CD8-positive, alpha-beta T cell (primary cell): ENCODE measurements at regions of chr2 and their contacts with region 1.

Region 1: GRCh38 chr2:3267869-3268704 is 109.5 kb downstream of the EIPR1 start:
- DNase-seq: no peak
- ATAC-seq: no peak
- H3K4me3 ChIP-seq: no peak overlapping the region
- H3K4me3 Mint-ChIP-seq: no peak overlapping the region
- H3K27ac ChIP-seq: no peak overlapping the region
- H3K27ac Mint-ChIP-seq: no peak overlapping the region
- H3K4me1 ChIP-seq: no peaks in the 10 kb centered on the region
- H3K4me1 Mint-ChIP-seq: no peaks in the 10 kb centered on the region
- H3K27me3 ChIP-seq: no peaks in the 10 kb centered on the region
- H3K27me3 Mint-ChIP-seq: no peaks in the 10 kb centered on the region
- CTCF ChIP-seq: no peak

Region 2: DNA sequence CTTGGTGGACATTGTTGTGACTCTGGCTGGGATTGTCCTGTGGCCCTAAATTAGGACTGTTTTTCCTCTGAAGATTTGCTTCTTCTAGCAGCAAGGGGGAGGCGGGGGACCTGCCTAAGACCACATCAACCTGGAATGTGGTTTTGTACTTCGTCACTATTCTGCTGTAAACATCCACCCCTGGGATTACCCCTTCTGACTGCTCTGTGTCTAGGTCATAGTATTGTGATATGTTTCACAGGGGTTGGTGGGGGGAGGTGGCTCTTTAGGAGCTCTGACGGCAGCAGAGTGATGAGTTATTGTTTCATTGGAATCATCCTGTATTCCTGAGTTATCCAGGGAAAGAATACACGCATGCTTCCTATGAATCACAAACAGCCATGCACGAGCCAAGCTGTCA is 710.6 kb before region 1 on chr2:
- CTCF ChIA-PET with region 1: no interaction called
- POLR2A ChIA-PET with region 1: no interaction called
- intact Hi-C with region 1: no loop called
- DNase-seq: peak in 3 of 9 experiments; percentile 25 to 61 (median 34)
- ATAC-seq: peak; percentile 89
- H3K4me3 ChIP-seq: no peak overlapping the region
- H3K4me3 Mint-ChIP-seq: no peak overlapping the region
- H3K27ac ChIP-seq: no peak overlapping the region
- H3K27ac Mint-ChIP-seq: peak overlapping the region; percentile 15
- H3K4me1 ChIP-seq: peaks cover 6% of the 10 kb centered on the region
- H3K4me1 Mint-ChIP-seq: peaks cover 4% of the 10 kb centered on the region
- H3K27me3 ChIP-seq: no peaks in the 10 kb centered on the region
- H3K27me3 Mint-ChIP-seq: no peaks in the 10 kb centered on the region
- CTCF ChIP-seq: no peak

Region 3: DNA sequence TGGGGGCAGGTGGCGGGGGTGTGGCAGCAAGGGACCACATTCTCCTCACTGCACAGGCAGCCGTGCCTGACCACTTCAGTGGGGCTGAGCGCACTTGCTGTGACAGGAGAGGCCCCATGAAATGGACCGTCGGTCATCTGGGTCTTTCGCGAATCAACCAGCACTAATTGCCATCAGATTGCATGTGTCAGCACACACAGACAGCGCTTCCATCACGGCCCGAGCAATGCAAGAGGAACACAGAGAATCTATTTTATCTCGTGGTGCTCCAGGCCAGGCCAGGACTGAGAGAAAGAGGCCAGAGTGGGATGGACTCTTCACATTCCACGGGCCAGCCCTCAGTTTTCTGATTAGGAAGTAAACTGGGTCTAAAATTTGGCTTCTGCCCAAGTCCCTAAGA is 22.6 kb after region 1 on chr2:
- CTCF ChIA-PET with region 1: no interaction called
- POLR2A ChIA-PET with region 1: no interaction called
- intact Hi-C with region 1: loop called in 1 of 2 experiments (anchors 1 kb)
- DNase-seq: no peak
- ATAC-seq: no peak
- H3K4me3 ChIP-seq: no peak overlapping the region
- H3K4me3 Mint-ChIP-seq: no peak overlapping the region
- H3K27ac ChIP-seq: no peak overlapping the region
- H3K27ac Mint-ChIP-seq: no peak overlapping the region
- H3K4me1 ChIP-seq: no peaks in the 10 kb centered on the region
- H3K4me1 Mint-ChIP-seq: no peaks in the 10 kb centered on the region
- H3K27me3 ChIP-seq: no peaks in the 10 kb centered on the region
- H3K27me3 Mint-ChIP-seq: no peaks in the 10 kb centered on the region
- CTCF ChIP-seq: no peak